CD4-positive, alpha-beta memory T cell (primary cell): ENCODE measurements at regions of chr10 and their contacts with region 1.

Region 1: DNA sequence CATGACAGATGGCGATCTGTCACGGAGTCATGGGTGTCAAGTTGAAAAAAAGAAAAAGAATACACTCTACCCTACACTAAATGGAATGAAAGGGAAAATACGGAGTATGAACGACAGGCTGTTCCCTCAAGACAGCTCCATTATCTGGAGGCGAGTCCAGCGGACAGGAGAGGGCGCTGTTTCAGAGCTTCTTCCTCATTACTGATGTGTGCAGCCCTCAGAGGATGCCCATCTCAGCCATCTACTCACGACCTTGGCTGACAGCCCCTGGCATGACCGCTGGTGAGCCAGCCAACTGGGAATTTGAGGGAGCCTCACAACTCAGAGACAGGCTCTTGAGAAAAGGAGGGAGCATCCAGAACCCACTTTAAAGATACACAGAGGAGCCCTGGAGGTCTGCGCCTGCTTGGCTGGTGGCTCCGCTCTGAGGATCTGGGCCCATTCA is 49.6 kb upstream of the SMNDC1 start:
- DNase-seq: peak; percentile 70 to 78 (median 77)
- H3K4me3 ChIP-seq: no peak overlapping the region
- H3K4me3 Mint-ChIP-seq: peak overlapping the region in 7 of 8 donors; percentile 44 to 75 (median 53)
- H3K27ac ChIP-seq: peak overlapping the region; percentile 81
- H3K27ac Mint-ChIP-seq: peak overlapping the region; percentile 93 to 100 (median 100)
- H3K4me1 ChIP-seq: peaks cover 53% of the 10 kb centered on the region
- H3K4me1 Mint-ChIP-seq: peaks cover 43 to 57% (median 52%) of the 10 kb centered on the region in 4 donors
- H3K27me3 ChIP-seq: no peaks in the 10 kb centered on the region
- H3K27me3 Mint-ChIP-seq: no peaks in the 10 kb centered on the region

Region 2: GRCh38 chr10:109880886-109881768 is 473.2 kb before region 1 on chr10:
- CTCF ChIA-PET with region 1: no interaction called
- POLR2A ChIA-PET with region 1: no interaction called
- intact Hi-C with region 1: no loop called
- DNase-seq: no peak
- H3K4me3 ChIP-seq: no peak overlapping the region
- H3K4me3 Mint-ChIP-seq: no peak overlapping the region
- H3K27ac ChIP-seq: no peak overlapping the region
- H3K27ac Mint-ChIP-seq: peak overlapping the region in 1 of 7 donors; percentile 22
- H3K4me1 ChIP-seq: peaks cover 8% of the 10 kb centered on the region
- H3K4me1 Mint-ChIP-seq: peaks cover 4 to 17% (median 10%) of the 10 kb centered on the region in 4 donors
- H3K27me3 ChIP-seq: no peaks in the 10 kb centered on the region
- H3K27me3 Mint-ChIP-seq: no peaks in the 10 kb centered on the region

Region 3: GRCh38 chr10:110311357-110311949 is 42.9 kb before region 1 on chr10:
- CTCF ChIA-PET with region 1: interaction called, 13 read pairs
- POLR2A ChIA-PET with region 1: interaction called, 34 read pairs
- intact Hi-C with region 1: loop called (anchors 1 kb)
- DNase-seq: peak; percentile 43 to 56 (median 48)
- H3K4me3 ChIP-seq: no peak overlapping the region
- H3K4me3 Mint-ChIP-seq: no peak overlapping the region
- H3K27ac ChIP-seq: no peak overlapping the region
- H3K27ac Mint-ChIP-seq: peak overlapping the region in 1 of 7 donors; percentile 9
- H3K4me1 ChIP-seq: peaks cover 1% of the 10 kb centered on the region
- H3K4me1 Mint-ChIP-seq: peaks cover 0 to 7% (median 0%) of the 10 kb centered on the region in 4 donors
- H3K27me3 ChIP-seq: no peaks in the 10 kb centered on the region
- H3K27me3 Mint-ChIP-seq: no peaks in the 10 kb centered on the region

Region 4: GRCh38 chr10:110368002-110368401 is 13.7 kb after region 1 on chr10:
- CTCF ChIA-PET with region 1: interaction called, 14 read pairs
- POLR2A ChIA-PET with region 1: interaction called, 11 read pairs
- intact Hi-C with region 1: no loop called
- DNase-seq: no peak
- H3K4me3 ChIP-seq: no peak overlapping the region
- H3K4me3 Mint-ChIP-seq: no peak overlapping the region
- H3K27ac ChIP-seq: no peak overlapping the region
- H3K27ac Mint-ChIP-seq: peak overlapping the region in 1 of 7 donors; percentile 59
- H3K4me1 ChIP-seq: peaks cover 18% of the 10 kb centered on the region
- H3K4me1 Mint-ChIP-seq: peaks cover 11 to 18% (median 15%) of the 10 kb centered on the region in 4 donors
- H3K27me3 ChIP-seq: no peaks in the 10 kb centered on the region
- H3K27me3 Mint-ChIP-seq: no peaks in the 10 kb centered on the region

Region 5: GRCh38 chr10:110414563-110415309 is 60.4 kb after region 1 on chr10:
- CTCF ChIA-PET with region 1: interaction called, 4 read pairs
- POLR2A ChIA-PET with region 1: interaction called, 49 read pairs
- intact Hi-C with region 1: loop called (anchors 1 kb)
- DNase-seq: peak; percentile 88 to 99 (median 94)
- H3K4me3 ChIP-seq: peak overlapping the region in 1 of 2 donors; percentile 5
- H3K4me3 Mint-ChIP-seq: peak overlapping the region; percentile 22 to 71 (median 62)
- H3K27ac ChIP-seq: peak overlapping the region; percentile 62
- H3K27ac Mint-ChIP-seq: peak overlapping the region; percentile 89 to 98 (median 93)
- H3K4me1 ChIP-seq: peaks cover 43% of the 10 kb centered on the region
- H3K4me1 Mint-ChIP-seq: peaks cover 25 to 60% (median 33%) of the 10 kb centered on the region in 4 donors
- H3K27me3 ChIP-seq: no peaks in the 10 kb centered on the region
- H3K27me3 Mint-ChIP-seq: no peaks in the 10 kb centered on the region

Region 6: DNA sequence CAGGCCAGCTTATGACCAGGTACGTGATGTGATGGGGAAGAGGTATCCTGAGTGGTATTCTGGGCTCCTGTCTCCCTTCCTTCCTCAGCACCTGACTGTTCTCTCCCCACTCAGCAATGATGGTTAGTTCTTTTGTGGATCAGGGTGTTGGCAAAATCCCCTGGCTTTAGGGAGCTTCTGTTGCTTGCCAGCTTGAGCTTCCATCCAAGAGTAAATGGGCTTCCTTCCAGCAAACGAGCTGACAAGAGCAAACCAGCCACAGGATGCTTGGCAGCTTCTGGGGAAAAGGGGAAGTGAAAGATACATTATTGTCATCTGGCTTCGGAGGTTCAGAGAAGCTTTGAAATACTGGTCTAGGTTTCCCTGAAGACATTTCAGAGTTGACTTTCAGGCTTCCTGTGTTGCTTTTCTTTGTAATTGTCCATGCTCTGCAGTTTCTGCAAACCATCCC is 148.5 kb after region 1 on chr10:
- CTCF ChIA-PET with region 1: interaction called, 142 read pairs
- POLR2A ChIA-PET with region 1: interaction called, 113 read pairs
- intact Hi-C with region 1: loop called (anchors 1 kb)
- DNase-seq: peak in 1 of 5 donors; percentile 14
- H3K4me3 ChIP-seq: peak overlapping the region in 1 of 2 donors; percentile 28
- H3K4me3 Mint-ChIP-seq: peak overlapping the region; percentile 61 to 98 (median 94)
- H3K27ac ChIP-seq: peak overlapping the region; percentile 79
- H3K27ac Mint-ChIP-seq: peak overlapping the region; percentile 90 to 97 (median 95)
- H3K4me1 ChIP-seq: peaks cover 80% of the 10 kb centered on the region
- H3K4me1 Mint-ChIP-seq: peaks cover 64 to 90% (median 81%) of the 10 kb centered on the region in 4 donors
- H3K27me3 ChIP-seq: no peaks in the 10 kb centered on the region
- H3K27me3 Mint-ChIP-seq: no peaks in the 10 kb centered on the region

Region 7: DNA sequence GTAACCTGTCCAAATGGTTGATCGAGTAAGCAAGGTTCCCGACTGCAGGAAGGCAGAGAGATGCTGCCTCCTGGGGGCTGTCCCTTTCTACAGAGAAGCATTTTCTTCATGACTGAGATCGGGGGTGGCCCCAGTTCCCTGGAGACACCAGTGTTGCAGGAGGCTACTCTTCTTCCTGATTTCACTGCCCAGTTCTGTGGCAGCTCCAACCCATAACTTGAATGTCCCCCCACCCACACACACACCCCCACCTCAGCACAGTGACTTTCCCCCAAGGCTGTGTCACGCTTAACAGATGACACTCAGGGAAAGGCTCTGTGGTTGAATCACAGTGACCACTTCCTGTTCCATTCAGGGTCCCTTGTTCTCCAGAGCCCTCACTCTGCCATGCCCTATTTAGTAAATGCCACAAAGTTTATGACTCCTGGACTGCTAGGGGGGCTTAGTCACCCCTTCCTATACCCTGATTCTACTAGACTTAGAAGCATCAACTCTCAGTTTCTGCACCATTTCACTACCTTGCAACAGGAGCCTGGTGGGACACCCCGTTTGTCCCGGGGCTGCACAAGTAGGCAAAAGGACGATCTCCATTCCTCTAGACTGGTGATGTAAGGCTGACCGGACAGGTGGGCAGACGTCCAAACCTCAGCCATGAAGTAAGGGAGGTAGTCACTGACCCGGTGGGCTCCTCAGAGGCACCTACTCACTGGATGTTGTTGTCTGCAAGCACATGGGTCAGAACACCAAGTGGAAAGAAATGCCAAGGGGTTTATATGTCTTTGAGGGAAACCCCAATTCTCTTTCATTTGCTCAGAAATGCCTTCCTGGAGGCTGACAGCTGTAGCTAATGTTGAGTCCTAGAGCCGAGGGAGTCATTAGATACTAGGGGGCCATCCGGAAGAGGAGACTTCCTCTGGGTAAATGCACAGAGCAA is 181.9 kb after region 1 on chr10:
- CTCF ChIA-PET with region 1: interaction called, 12 read pairs
- POLR2A ChIA-PET with region 1: interaction called, 3 read pairs
- intact Hi-C with region 1: loop called (anchors 1 kb)
- DNase-seq: peak; percentile 32 to 82 (median 48)
- H3K4me3 ChIP-seq: no peak overlapping the region
- H3K4me3 Mint-ChIP-seq: peak overlapping the region in 6 of 8 donors; percentile 23 to 72 (median 60)
- H3K27ac ChIP-seq: no peak overlapping the region
- H3K27ac Mint-ChIP-seq: peak overlapping the region in 6 of 7 donors; percentile 8 to 85 (median 60)
- H3K4me1 ChIP-seq: peaks cover 12% of the 10 kb centered on the region
- H3K4me1 Mint-ChIP-seq: peaks cover 13 to 19% (median 16%) of the 10 kb centered on the region in 4 donors
- H3K27me3 ChIP-seq: no peaks in the 10 kb centered on the region
- H3K27me3 Mint-ChIP-seq: no peaks in the 10 kb centered on the region

Region 8: GRCh38 chr10:110547139-110547761 is 192.9 kb after region 1 on chr10:
- CTCF ChIA-PET with region 1: interaction called, 115 read pairs
- POLR2A ChIA-PET with region 1: interaction called, 11 read pairs
- intact Hi-C with region 1: loop called (anchors 1 kb)
- DNase-seq: peak in 4 of 5 donors; percentile 67 to 74 (median 70)
- H3K4me3 ChIP-seq: no peak overlapping the region
- H3K4me3 Mint-ChIP-seq: no peak overlapping the region
- H3K27ac ChIP-seq: no peak overlapping the region
- H3K27ac Mint-ChIP-seq: peak overlapping the region in 1 of 7 donors; percentile 59
- H3K4me1 ChIP-seq: peaks cover 8% of the 10 kb centered on the region
- H3K4me1 Mint-ChIP-seq: peaks cover 4 to 8% (median 5%) of the 10 kb centered on the region in 4 donors
- H3K27me3 ChIP-seq: peaks cover 3% of the 10 kb centered on the region
- H3K27me3 Mint-ChIP-seq: peaks cover 1 to 13% of the 10 kb centered on the region in 2 donors

Region 9: DNA sequence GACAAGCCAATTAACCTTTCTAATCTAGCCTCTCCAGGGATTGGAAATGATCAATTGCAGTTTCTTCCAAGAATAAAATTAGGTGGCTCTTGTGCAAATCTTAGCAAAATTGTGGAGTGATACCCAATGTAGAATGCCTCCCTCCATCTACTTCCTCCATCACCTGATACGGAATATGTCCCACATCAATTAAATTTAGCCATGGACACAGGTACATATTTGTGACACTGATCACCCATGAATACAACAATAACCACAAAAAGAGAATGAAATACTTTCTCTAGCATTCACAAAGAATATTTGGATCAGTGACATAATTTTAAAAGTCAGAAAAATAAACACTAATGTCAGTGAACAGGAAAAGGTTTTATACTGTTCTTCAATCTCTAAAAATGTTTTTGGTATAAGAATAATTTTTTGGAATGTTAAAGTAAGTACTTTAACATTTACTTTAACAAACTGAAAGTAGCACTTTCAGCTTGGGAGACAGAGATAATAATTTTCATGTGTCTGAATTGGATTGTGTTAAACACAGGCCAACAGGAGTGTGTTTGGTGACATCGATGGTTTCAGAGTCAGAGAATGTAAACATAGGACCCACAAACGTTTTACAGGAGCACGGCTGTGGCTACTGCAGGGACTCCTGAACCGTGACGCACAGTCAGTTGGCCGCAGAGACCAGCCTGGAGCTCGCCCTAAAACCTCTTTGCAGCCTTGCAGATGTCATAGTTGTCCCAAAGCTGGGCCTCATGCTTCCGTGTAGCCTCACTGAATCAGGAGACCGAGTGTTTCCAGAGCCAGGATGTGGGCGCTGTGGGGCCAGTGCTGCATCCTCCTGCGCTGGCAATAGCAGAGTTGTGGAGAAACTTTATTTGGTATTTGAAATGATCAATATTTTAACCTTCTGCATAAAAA is 297.0 kb after region 1 on chr10:
- CTCF ChIA-PET with region 1: no interaction called
- POLR2A ChIA-PET with region 1: no interaction called
- intact Hi-C with region 1: no loop called
- DNase-seq: peak in 1 of 5 donors; percentile 13
- H3K4me3 ChIP-seq: no peak overlapping the region
- H3K4me3 Mint-ChIP-seq: no peak overlapping the region
- H3K27ac ChIP-seq: no peak overlapping the region
- H3K27ac Mint-ChIP-seq: no peak overlapping the region
- H3K4me1 ChIP-seq: peaks cover 5% of the 10 kb centered on the region
- H3K4me1 Mint-ChIP-seq: peaks cover 0 to 5% (median 3%) of the 10 kb centered on the region in 4 donors
- H3K27me3 ChIP-seq: peaks cover 9% of the 10 kb centered on the region
- H3K27me3 Mint-ChIP-seq: peaks cover 25 to 41% of the 10 kb centered on the region in 2 donors